Caco-2 (cell line): ENCODE measurements at regions of chr2 and their contacts with region 1.

Region 1: DNA sequence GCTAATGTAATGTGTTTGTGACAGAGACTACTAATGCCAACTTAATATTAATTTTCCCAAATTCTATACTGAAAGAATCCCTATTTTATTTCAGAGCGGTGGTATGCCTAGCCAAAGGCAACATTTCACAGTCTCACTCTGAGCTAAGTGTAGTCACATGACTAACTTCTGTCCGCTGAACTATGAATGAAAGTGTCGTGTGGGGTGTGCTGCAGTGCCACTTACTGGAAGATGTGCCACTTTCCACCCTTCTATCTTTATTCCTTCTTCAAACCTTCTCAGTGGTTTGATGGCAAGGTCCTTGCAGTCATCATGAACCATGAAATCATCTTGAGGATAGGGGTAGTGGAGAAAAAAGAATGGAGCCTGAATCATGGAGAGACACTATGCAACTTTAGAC is 47.3 kb upstream of the C1D start:
- DNase-seq: peak in 1 of 2 experiments; percentile 19
- H3K4me3 ChIP-seq: no peak overlapping the region
- H3K4me3 Mint-ChIP-seq: no peak overlapping the region
- H3K27ac Mint-ChIP-seq: no peak overlapping the region
- H3K4me1 ChIP-seq: no peaks in the 10 kb centered on the region
- H3K4me1 Mint-ChIP-seq: no peaks in the 10 kb centered on the region
- H3K27me3 ChIP-seq: no peaks in the 10 kb centered on the region
- H3K27me3 Mint-ChIP-seq: no peaks in the 10 kb centered on the region
- CTCF ChIP-seq: peak in 1 of 2 experiments; percentile 18

Region 2: DNA sequence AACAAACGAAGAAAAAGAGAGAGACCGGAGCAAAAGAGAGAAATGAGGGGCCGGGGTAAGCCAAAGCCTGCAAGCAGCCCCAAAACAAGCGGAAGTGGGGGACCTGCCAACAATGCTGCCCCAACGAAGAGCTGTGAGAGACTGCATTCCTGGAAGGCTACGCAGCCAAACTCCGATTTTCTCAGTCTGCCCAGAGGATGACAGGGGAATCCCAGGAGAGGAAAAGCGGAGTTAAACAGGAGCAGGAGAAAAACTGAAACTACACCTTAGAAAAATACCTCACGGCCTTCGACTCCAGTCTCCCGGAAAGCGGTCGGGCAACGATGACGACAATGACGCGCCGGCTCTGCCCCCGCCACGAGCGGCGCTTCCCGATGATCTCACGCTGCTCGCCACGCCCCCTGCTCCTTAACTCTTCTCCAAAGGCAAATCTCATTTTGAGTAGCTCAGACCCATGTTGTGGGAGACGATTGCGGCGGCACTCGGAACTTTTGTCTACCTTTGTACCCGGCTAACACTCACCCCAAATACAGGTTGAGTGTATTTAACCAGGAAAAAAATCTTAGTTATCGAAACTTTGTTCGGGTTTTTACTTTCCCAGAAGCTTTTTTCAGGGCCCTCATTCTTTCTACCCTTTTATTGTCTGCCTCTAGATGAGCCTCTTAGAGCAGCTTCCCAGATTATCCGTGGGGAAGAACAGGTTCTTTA is 47.3 kb before region 1 on chr2 and contains the start of gene C1D:
- CTCF ChIA-PET with region 1: no interaction called
- POLR2A ChIA-PET with region 1: no interaction called
- intact Hi-C with region 1: loop called (anchors 2 kb)
- DNase-seq: peak; percentile 93 to 95
- H3K4me3 ChIP-seq: peak within 1 kb of the TSS; percentile 62
- H3K4me3 Mint-ChIP-seq: peak within 1 kb of the TSS; percentile 94
- H3K27ac Mint-ChIP-seq: peak within 1 kb of the TSS; percentile 99
- H3K4me1 ChIP-seq: peaks cover 17% of the 10 kb centered on the region; the same call in 1 of the 2 replicates
- H3K4me1 Mint-ChIP-seq: no peaks in the 10 kb centered on the region
- H3K27me3 ChIP-seq: no peaks in the 10 kb centered on the region
- H3K27me3 Mint-ChIP-seq: no peaks in the 10 kb centered on the region
- CTCF ChIP-seq: no peak
- total RNA-seq, gene C1D: 19.3 and 23.7 TPM in 2 replicates

Region 3: DNA sequence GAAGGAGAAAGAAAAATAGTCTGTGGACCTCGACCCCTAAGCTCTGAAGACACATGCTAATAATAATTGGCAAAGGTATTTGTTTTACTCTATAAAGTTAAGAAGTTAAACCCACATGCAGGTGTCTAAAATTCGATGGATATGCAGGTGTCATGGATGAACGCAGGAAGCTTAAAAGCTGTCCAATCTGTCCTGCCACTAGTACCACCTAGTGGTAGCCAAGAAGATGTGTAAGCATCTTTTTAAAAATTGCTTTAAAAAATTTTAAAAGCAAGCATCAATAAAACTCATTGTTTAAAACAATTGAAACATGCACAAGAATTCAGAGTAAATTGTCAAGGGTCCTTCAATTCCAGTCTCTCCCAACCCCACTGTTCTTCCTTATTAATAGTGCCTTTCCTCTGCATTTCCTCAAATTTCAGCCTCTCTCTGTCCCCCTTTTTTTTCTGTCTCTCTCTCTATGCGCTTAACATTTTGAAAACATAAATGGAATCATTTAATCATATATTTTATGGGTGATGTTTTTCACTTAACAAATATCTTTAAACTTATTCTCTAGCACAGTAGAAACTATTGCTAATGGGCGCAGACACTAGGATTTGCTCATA is 172.8 kb after region 1 on chr2:
- CTCF ChIA-PET with region 1: no interaction called
- POLR2A ChIA-PET with region 1: no interaction called
- intact Hi-C with region 1: no loop called
- DNase-seq: peak in 1 of 2 experiments; percentile 31
- H3K4me3 ChIP-seq: no peak overlapping the region
- H3K4me3 Mint-ChIP-seq: no peak overlapping the region
- H3K27ac Mint-ChIP-seq: no peak overlapping the region
- H3K4me1 ChIP-seq: no peaks in the 10 kb centered on the region
- H3K4me1 Mint-ChIP-seq: no peaks in the 10 kb centered on the region
- H3K27me3 ChIP-seq: no peaks in the 10 kb centered on the region; the same call in 1 of the 2 replicates
- H3K27me3 Mint-ChIP-seq: peaks cover 9% of the 10 kb centered on the region
- CTCF ChIP-seq: peak; percentile 68 to 74